ENCODE measurements at regions of chr3 and their contacts with region 1.

Region 1: GRCh38 chr3:141231101-141231935 is at the start of gene PXYLP1:
- DNase-seq: peak; percentile 90
- H3K4me3 Mint-ChIP-seq: peak within 1 kb of the TSS; percentile 97
- H3K27ac Mint-ChIP-seq: peak within 1 kb of the TSS; percentile 93
- H3K4me1 Mint-ChIP-seq: peaks cover 57% of the 10 kb centered on the region
- H3K27me3 Mint-ChIP-seq: no peaks in the 10 kb centered on the region
- total RNA-seq, gene PXYLP1: 57.2 and 66.0 TPM in 2 replicates

Region 2: GRCh38 chr3:141243271-141243707 is 12.0 kb after region 1 on chr3:
- intact Hi-C with region 1: loop called (anchors 1 kb)
- DNase-seq: peak; percentile 61
- H3K4me3 Mint-ChIP-seq: peak overlapping the region; percentile 32
- H3K27ac Mint-ChIP-seq: peak overlapping the region; percentile 87
- H3K4me1 Mint-ChIP-seq: peaks cover 60% of the 10 kb centered on the region
- H3K27me3 Mint-ChIP-seq: no peaks in the 10 kb centered on the region

Region 3: DNA sequence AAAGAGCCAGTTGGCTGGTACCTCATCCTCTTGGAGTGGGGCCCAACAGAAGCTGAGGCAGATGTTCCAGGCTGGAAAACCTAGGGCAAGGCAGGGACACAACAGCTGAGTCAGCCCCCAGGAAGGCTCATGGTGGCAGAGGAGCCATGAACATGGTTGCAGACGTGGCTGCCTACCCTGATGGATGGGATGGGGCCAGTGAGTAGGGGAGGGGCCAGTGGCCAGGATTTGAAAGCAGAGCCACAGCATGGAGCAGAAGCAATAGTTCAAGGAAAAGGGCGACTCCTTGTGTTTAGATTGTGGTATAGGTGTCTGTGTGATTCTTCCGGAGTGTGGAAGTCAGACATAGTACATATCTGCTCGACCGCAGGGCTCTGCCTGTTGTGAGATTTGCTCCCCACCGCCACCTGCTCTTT is 24.5 kb after region 1 on chr3:
- intact Hi-C with region 1: loop called (anchors 1 kb)
- DNase-seq: peak; percentile 42
- H3K4me3 Mint-ChIP-seq: no peak overlapping the region
- H3K27ac Mint-ChIP-seq: peak overlapping the region; percentile 57
- H3K4me1 Mint-ChIP-seq: peaks cover 68% of the 10 kb centered on the region
- H3K27me3 Mint-ChIP-seq: no peaks in the 10 kb centered on the region

Region 4: DNA sequence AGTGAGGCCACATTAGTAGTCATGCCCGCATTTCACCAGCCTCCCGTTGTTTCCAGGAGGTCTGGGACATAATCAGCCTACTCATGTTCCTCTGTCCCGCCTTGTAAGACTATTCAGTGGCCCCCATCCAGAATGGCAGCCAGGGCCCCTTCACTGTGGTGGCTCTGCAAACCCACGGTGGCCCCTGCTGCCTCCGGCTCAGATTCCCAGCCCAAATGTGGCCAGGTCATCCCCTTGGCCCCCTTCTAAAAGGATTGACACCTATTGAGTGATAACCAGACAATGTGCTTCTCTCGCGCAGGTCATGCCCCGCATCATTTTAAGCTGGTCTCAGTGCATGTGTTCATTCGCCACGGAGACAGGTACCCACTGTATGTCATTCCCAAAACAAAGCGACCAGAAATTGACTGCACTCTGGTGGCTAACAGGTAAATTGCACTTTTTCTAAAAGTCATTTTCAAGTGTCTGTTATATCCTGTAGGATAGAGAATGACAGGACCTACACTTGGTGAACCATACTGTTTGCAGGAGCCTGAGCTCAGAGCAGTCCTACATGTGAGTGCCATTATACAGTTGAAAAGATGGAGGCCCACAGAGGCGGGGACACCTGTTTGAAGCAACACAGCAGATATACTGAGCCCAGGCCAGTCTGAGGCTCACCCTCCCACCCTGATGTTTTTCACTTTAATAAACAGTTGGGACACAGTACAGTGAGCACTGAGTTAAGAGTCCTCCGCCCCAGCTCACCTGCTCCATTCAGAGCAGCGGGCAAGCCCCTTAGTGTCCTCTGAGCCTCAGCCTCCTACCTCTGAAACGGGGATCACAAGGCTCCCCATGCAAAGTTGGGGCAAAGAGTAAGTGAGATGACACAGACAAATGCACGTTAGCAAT is 48.0 kb after region 1 on chr3:
- intact Hi-C with region 1: loop called (anchors 1 kb)
- DNase-seq: no peak
- H3K4me3 Mint-ChIP-seq: no peak overlapping the region
- H3K27ac Mint-ChIP-seq: peak overlapping the region; percentile 71
- H3K4me1 Mint-ChIP-seq: peaks cover 35% of the 10 kb centered on the region
- H3K27me3 Mint-ChIP-seq: no peaks in the 10 kb centered on the region

Region 5: DNA sequence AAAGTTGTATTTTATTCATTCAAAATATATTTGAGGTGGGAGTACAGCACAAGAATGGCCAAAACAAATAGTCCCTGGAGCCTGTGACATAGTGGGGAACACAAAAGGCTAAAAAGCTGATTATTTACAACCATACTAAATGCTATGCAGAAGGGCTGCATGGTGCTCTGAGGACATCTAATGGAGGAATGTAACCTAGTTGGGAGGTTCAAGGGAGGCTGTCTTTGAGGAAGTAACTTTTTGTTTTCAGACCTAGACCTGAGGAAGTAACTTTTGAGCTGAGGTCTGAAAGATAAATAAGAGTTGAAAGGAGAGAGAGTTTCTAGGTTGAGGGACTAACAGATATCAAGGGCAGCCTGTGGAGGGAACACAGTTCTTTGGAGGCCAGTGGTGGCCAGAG is 220.7 kb after region 1 on chr3:
- intact Hi-C with region 1: loop called (anchors 1 kb)
- DNase-seq: no peak
- H3K4me3 Mint-ChIP-seq: no peak overlapping the region
- H3K27ac Mint-ChIP-seq: no peak overlapping the region
- H3K4me1 Mint-ChIP-seq: peaks cover 16% of the 10 kb centered on the region
- H3K27me3 Mint-ChIP-seq: no peaks in the 10 kb centered on the region

Measured in activated T-helper 2 cell treated with anti-CD3 and anti-CD28 coated beads, Interferon-gamma antibody, Interleukin-2, Interleukin-4, amounts not matched to agents 10 μg/mL and 5 μg/mL and 100 μg/mL, durations not matched to agents 14 hours and 24 hours and 36 hours (primary cell).